ENCODE measurements at regions of chr11 and their contacts with region 1.

Region 1: GRCh38 chr11:12288212-12288930 is 89.0 kb upstream of the PARVA start:
- DNase-seq: peak; percentile 95
- ATAC-seq: peak; percentile 69
- H3K4me3 Mint-ChIP-seq: no peak overlapping the region
- H3K27ac Mint-ChIP-seq: no peak overlapping the region
- H3K4me1 Mint-ChIP-seq: peaks cover 15% of the 10 kb centered on the region
- H3K27me3 Mint-ChIP-seq: no peaks in the 10 kb centered on the region
- CTCF ChIP-seq: peak; percentile 89

Region 2: GRCh38 chr11:12066799-12067508 is 221.4 kb before region 1 on chr11:
- CTCF ChIA-PET with region 1: interaction called, 15 read pairs
- POLR2A ChIA-PET with region 1: no interaction called
- DNase-seq: no peak
- ATAC-seq: peak; percentile 78
- H3K4me3 Mint-ChIP-seq: no peak overlapping the region
- H3K27ac Mint-ChIP-seq: peak overlapping the region; percentile 4
- H3K4me1 Mint-ChIP-seq: peaks cover 26% of the 10 kb centered on the region
- H3K27me3 Mint-ChIP-seq: no peaks in the 10 kb centered on the region; the same call in 1 of the 2 replicates
- CTCF ChIP-seq: no peak

Region 3: GRCh38 chr11:12269104-12269441 is 19.3 kb before region 1 on chr11:
- CTCF ChIA-PET with region 1: interaction called, 11 read pairs
- POLR2A ChIA-PET with region 1: no interaction called
- DNase-seq: no peak
- ATAC-seq: no peak
- H3K4me3 Mint-ChIP-seq: no peak overlapping the region
- H3K27ac Mint-ChIP-seq: no peak overlapping the region
- H3K4me1 Mint-ChIP-seq: peaks cover 6% of the 10 kb centered on the region
- H3K27me3 Mint-ChIP-seq: no peaks in the 10 kb centered on the region
- CTCF ChIP-seq: no peak

Region 4: DNA sequence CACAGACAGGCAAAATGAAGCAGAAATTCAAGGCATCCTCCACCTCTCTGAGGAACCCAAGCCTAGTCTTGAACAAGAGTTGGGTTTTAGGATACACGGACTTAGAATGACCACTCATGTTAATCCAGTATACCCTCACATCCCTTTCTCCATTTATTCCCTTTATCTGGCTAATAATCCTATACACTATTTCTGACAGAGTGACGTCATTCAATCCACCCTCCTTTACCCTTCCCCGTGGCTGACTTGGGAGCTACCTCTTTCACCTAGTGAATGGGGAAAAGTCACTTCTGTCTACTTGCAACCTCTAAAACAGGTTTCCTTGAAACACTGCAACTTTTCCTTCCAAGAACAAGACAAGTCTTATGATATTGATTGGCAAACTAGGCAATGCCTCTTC is 36.2 kb after region 1 on chr11:
- CTCF ChIA-PET with region 1: interaction called, 101 read pairs
- POLR2A ChIA-PET with region 1: no interaction called
- DNase-seq: no peak
- ATAC-seq: no peak
- H3K4me3 Mint-ChIP-seq: no peak overlapping the region
- H3K27ac Mint-ChIP-seq: no peak overlapping the region
- H3K4me1 Mint-ChIP-seq: peaks cover 10% of the 10 kb centered on the region
- H3K27me3 Mint-ChIP-seq: no peaks in the 10 kb centered on the region; the same call in 1 of the 2 replicates
- CTCF ChIP-seq: no peak

Region 5: GRCh38 chr11:12411806-12412727 is 123.7 kb after region 1 on chr11:
- CTCF ChIA-PET with region 1: interaction called, 19 read pairs
- POLR2A ChIA-PET with region 1: no interaction called
- DNase-seq: peak; percentile 85
- ATAC-seq: peak; percentile 92
- H3K4me3 Mint-ChIP-seq: no peak overlapping the region
- H3K27ac Mint-ChIP-seq: peak overlapping the region; percentile 80
- H3K4me1 Mint-ChIP-seq: peaks cover 52% of the 10 kb centered on the region
- H3K27me3 Mint-ChIP-seq: no peaks in the 10 kb centered on the region
- CTCF ChIP-seq: peak; percentile 62; the same call in 1 of the 2 replicates

Region 6: DNA sequence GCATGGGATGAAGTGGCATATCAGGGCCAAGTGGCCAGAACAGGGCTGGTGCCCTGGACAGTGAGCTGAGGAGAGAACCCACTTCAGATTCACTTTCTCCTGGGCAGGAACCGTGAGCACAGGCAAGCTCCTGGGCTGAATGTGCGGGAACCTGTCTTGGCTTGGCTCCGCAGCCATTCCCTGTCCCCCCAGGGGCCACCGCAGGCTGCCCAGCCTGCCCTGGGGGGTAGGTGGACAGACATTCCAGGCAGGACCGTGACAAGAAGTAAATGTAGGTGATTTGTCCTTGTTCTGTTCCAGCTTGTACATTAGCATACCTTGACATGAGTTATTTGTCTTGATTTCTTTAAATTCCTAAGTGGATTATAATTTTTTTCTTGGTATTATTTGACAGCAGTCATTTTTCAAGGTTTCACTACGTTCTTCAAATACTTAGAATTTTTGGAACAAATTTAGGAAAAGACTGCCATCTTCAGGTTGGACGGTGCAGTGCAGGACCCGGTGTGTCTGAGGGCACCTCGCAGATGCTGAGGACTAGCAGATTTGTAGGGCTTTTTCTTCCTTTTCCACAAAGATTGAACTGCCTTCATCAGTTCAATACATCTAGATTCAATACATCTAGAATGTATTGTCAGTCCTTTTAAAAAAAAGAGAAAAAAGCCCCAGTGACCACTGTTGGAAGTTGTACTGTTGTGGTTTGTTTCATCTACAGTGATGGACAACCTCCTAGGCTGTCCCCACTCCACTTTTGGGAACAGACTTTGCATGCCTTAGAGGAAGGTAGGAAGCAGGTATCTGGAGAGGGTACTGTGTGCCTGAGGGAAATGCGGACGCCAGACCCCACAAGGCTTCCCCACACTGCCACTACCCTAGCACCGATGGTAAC is 605.7 kb after region 1 on chr11:
- CTCF ChIA-PET with region 1: interaction called, 24 read pairs
- POLR2A ChIA-PET with region 1: no interaction called
- DNase-seq: peak; percentile 84
- ATAC-seq: peak; percentile 61
- H3K4me3 Mint-ChIP-seq: no peak overlapping the region
- H3K27ac Mint-ChIP-seq: peak overlapping the region; percentile 30
- H3K4me1 Mint-ChIP-seq: peaks cover 27% of the 10 kb centered on the region
- H3K27me3 Mint-ChIP-seq: no peaks in the 10 kb centered on the region
- CTCF ChIP-seq: peak; percentile 80

Region 7: DNA sequence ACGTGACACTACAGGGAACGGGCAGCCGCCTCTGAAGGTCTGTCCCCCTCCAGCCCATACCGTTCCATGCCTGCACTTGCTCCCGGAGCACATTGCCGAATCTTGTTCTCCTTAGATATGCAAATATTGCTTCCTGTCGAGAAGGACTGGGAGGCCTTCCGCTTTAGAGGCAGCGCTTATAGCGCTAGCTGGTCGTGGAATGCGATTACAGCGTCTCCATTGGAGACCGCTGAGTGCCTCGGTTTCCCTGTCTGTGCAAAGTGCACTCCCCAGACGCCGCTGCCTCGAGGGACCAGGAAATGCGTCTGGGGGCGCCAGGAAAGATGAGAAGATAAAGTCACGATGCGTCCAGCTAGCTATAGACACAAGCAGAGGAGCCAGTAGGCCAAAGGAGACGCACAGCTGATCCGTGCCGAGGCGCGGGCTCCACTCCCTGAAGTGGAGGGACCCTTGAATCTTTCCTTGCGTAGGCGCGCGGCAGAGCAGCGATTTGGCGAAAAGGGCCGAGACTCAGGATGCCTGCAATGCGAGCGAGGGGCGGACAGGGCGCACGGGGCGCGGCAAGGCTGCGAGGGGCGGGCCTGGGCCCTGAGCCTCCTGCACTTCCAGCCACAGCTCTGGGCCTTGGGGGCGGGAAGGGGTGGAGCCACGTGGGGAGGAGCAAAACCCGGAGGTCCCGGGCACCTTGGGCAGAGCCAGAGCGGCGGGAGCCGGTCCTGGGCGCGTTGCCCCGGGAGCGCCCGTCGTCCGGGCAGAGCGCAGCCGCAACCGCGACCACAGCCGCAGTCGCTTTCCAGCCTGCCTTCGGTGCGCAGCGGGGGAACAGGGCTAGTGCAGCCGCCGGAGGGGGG is 720.5 kb after region 1 on chr11 and contains the start of gene RASSF10:
- CTCF ChIA-PET with region 1: interaction called, 10 read pairs
- POLR2A ChIA-PET with region 1: no interaction called
- DNase-seq: peak; percentile 95
- ATAC-seq: peak; percentile 87
- H3K4me3 Mint-ChIP-seq: peak within 1 kb of the TSS; percentile 81
- H3K27ac Mint-ChIP-seq: peak within 1 kb of the TSS; percentile 96
- H3K4me1 Mint-ChIP-seq: peaks cover 55% of the 10 kb centered on the region
- H3K27me3 Mint-ChIP-seq: peaks cover 63% of the 10 kb centered on the region
- CTCF ChIP-seq: no peak
- total RNA-seq, gene RASSF10: 2.6 to 3.2 TPM (median 2.9 TPM) in 3 replicates

Measured in WTC11 (cell line).